ENCODE measurements at regions of chr14 and their contacts with region 1.

Region 1: DNA sequence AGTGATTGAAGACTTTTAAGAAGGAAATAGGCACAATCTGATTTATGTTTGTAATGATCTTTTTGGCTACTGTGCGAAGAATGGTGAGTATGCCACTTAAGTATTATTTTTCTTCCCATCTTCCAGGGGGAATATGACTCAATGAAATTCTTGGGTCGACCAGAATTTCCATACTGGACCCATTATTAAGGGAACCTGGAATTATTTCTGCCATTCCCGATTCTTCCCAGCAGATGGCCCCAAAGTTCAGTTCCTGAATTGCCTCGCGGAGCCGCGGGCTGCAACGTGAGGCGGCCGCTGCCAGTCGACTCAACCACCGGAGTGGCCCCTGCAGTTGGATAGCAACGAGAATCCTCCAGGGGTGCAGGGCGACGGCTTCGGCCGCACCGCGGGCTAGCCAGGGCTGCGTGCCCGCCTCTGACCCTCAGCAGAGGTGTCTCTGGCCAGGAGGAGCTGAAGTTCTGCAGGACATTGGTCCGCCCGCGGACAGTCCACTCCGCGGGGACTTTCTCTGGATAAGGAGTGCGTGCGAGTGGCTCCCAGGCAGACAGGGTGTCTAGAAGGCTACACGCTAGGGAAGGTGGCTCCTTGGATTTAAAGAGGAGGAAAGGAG is 628 bp upstream of the TSHR start:
- DNase-seq: peak; percentile 47 to 82
- H3K4me3 ChIP-seq: peak overlapping the region; percentile 38; the same call in 1 of the 2 replicates
- H3K27ac ChIP-seq: no peak overlapping the region
- H3K4me1 ChIP-seq: no peaks in the 10 kb centered on the region
- H3K27me3 ChIP-seq: peaks cover 10% of the 10 kb centered on the region; the same call in 1 of the 2 replicates
- CTCF ChIP-seq: peak; percentile 88

Region 2: GRCh38 chr14:79167960-79168359 is 1786.8 kb before region 1 on chr14:
- CTCF ChIA-PET with region 1: no interaction called
- POLR2A ChIA-PET with region 1: no interaction called
- intact Hi-C with region 1: no loop called
- DNase-seq: no peak
- H3K4me3 ChIP-seq: no peak overlapping the region
- H3K27ac ChIP-seq: no peak overlapping the region
- H3K4me1 ChIP-seq: no peaks in the 10 kb centered on the region
- H3K27me3 ChIP-seq: no peaks in the 10 kb centered on the region
- CTCF ChIP-seq: no peak

Region 3: DNA sequence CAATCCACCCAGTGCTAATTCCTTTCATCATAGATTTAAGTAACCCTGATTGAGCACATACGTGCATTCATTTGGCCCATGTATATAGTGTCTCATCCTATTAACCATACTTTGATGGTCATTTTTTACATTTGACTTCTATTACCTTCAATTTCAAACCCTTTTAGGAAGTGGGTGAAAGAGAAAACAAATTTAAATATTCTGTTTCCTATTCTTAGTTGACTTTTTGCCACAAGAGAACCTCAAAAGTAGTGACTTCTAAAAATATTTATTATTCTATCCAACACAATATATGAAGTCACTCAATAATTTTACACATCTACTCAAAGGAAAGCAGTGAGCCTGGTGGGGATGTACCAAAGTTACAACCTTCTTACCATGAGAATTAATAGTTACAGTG is 178.1 kb before region 1 on chr14:
- CTCF ChIA-PET with region 1: no interaction called
- POLR2A ChIA-PET with region 1: no interaction called
- intact Hi-C with region 1: no loop called
- DNase-seq: no peak
- H3K4me3 ChIP-seq: no peak overlapping the region
- H3K27ac ChIP-seq: no peak overlapping the region
- H3K4me1 ChIP-seq: no peaks in the 10 kb centered on the region
- H3K27me3 ChIP-seq: no peaks in the 10 kb centered on the region
- CTCF ChIP-seq: no peak

Region 4: DNA sequence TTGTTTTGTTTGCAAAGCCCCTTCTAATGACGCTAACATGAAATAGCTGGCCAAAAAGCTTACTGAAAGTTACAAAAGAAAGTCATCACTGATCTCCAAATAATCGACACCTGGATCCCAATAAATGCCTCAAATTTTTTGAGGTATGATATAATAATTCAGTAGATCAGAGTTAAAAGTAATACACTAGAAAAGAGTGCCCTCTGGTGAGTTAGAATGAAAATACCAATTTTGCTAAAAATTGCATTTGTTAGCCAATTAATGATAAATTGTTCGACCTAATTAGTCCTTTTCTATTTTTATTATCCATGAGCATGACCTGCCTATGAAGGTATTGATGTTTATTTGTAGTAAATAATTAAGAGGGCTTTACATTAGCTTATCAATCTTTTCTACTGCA is 91.8 kb before region 1 on chr14:
- CTCF ChIA-PET with region 1: no interaction called
- POLR2A ChIA-PET with region 1: no interaction called
- intact Hi-C with region 1: no loop called
- DNase-seq: no peak
- H3K4me3 ChIP-seq: no peak overlapping the region
- H3K27ac ChIP-seq: no peak overlapping the region
- H3K4me1 ChIP-seq: no peaks in the 10 kb centered on the region
- H3K27me3 ChIP-seq: no peaks in the 10 kb centered on the region
- CTCF ChIP-seq: peak; percentile 70

Region 5: DNA sequence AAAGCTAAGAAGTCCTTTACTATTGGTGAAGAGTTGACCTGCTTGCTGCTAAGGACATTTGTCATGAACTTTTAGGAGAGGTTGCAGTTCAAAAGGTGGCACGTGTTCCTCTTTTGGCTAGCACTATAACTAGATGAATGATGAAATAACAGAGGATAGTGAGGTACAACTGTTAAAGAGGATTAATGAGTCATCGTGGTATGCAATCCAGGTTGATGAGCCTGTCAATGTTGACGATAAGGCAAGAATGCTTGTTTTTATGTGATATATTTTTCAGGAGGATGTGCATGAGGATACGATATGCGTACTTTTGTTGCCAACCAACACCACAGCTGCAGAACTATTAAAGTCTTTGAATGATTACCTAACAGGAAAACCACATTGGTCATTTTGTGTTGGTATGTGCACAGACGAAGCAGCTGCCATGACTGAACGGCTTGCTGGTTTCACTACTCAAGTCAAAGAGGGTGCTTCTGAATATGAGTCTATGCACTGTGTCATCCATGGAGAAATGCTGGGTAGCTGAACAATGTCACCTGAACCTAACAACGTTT is 23.9 kb before region 1 on chr14:
- CTCF ChIA-PET with region 1: no interaction called
- POLR2A ChIA-PET with region 1: no interaction called
- intact Hi-C with region 1: no loop called
- DNase-seq: peak in 1 of 2 experiments; percentile 45
- H3K4me3 ChIP-seq: no peak overlapping the region
- H3K27ac ChIP-seq: 0 out of 2 replicates have a peak overlapping the region, but pooled peaks have one; percentile 3
- H3K4me1 ChIP-seq: peaks cover 10% of the 10 kb centered on the region; the same call in 1 of the 2 replicates
- H3K27me3 ChIP-seq: no peaks in the 10 kb centered on the region
- CTCF ChIP-seq: no peak

Region 6: DNA sequence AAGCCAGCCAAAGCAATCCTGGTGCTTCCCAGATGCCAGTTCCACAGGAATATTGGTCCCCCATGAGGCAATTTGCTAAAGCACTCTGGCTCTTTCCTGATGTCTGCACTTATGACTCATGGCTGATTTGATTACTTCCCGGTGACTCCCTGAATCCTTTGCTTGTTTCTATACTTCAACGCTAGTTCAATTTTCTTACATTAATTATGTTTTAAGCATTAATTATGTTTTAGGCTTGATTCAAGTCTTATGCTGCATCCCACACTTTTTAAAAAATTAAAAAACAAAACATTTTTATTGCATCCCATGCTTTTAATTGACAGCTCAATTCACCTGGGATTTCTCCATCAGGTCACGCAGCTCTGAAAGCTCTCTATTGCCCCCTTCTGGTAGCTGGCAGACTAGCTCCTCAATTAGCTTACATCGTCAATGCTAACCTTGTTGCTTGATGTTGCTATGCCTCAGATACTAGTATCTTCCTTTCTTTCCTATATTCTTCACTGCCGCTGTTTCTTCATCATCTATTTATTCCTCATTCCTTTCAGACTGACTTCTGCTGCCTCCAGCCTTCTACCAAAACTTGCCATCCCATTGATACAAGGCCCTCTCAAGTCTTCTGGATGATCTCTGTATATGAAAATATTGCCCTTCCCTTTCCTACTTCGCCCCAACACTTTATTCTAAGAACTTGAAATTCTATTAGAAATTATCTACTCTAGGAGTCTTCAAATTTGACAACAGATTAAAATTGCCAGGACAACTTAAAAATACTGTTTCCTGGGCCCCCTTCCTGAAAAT is 32.6 kb after region 1 on chr14:
- CTCF ChIA-PET with region 1: interaction called, 16 read pairs
- POLR2A ChIA-PET with region 1: no interaction called
- intact Hi-C with region 1: loop called (anchors 1 kb)
- DNase-seq: peak; percentile 69 to 72
- H3K4me3 ChIP-seq: peak overlapping the region; percentile 4; the same call in 1 of the 2 replicates
- H3K27ac ChIP-seq: no peak overlapping the region
- H3K4me1 ChIP-seq: peaks cover 7% of the 10 kb centered on the region; the same call in 1 of the 2 replicates
- H3K27me3 ChIP-seq: peaks cover 10% of the 10 kb centered on the region; the same call in 1 of the 2 replicates
- CTCF ChIP-seq: peak; percentile 98

Region 7: DNA sequence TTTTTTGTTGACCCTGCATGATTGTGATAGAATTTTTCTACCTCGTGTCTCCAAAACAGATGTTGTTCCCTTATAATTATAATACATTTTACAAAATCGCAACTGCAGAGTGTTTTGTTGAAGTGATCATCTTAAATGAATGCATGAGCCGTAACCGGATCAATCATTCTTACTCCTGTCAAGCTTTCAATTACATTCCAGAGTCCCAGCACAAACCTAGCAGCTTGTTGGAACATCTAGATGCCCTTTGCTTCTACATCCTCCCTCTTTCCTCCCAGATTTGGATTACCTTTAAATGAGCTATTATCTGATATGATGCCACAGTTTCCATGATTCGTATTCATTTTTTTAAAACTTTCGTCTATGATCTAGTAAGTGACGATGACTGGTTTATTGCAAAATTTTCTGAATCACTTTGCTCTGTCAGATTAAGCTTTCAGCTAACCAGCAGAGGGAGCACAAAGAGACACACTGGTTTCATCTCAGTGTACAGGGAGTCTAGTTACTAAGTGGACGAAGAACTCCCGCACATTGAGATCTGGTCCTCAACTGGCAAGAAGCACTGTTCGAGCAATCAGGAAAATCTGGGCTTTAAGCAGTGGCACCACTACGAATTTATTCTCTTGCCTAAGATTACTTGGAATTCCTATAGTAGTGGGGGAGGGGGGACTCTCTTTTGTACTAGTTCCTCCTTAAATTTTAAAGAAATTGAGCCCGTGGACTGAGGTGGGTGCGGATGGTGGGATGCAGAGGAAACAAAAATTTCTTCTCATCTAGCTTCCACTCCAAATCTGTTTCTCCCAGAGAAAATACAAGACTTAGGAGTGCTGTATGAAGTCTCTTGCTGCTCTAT is 41.5 kb after region 1 on chr14:
- CTCF ChIA-PET with region 1: no interaction called
- POLR2A ChIA-PET with region 1: no interaction called
- intact Hi-C with region 1: loop called (anchors 2 kb)
- DNase-seq: peak in 1 of 2 experiments; percentile 65
- H3K4me3 ChIP-seq: no peak overlapping the region
- H3K27ac ChIP-seq: no peak overlapping the region
- H3K4me1 ChIP-seq: no peaks in the 10 kb centered on the region
- H3K27me3 ChIP-seq: peaks cover 14% of the 10 kb centered on the region
- CTCF ChIP-seq: peak; percentile 73

Region 8: DNA sequence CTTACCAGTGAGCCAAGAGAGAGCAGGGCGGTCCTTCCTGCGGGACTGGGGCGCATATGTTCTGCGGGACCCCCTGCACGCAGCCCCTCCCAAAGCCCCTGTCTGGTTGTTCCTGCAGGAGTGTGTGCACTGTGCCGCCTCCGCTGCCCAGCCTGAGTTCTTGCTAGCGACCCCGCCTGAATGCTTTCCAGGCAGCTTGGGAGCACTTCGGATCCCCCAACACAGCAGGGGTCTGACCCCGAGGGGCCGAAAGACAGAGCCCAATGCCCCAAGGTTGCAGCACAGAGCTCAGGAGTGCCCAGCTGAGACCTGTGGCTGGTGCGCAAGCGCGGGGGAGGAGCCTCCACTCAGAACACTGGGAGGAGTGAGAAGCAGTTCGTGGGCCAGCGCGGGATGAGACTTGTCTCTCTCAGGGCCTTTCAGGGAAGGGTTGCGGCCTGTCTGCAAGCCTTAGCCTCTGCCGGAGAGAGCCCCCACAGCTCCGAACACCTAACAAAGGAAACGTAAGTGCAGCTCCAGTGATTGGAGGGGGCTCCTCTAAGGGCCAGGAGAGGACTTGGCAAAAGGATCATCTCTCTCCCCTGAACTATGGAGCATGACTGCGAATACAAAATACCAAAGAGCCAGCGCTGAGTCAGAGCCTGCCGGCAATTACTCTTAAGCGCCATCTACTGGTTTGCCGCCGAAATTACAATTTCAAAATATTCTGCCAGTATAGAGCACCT is 215.5 kb after region 1 on chr14:
- CTCF ChIA-PET with region 1: no interaction called
- POLR2A ChIA-PET with region 1: no interaction called
- intact Hi-C with region 1: loop called (anchors 1 kb)
- DNase-seq: peak; percentile 68 to 84
- H3K4me3 ChIP-seq: peak overlapping the region; percentile 54
- H3K27ac ChIP-seq: 0 out of 2 replicates have a peak overlapping the region, but pooled peaks have one; percentile 16
- H3K4me1 ChIP-seq: no peaks in the 10 kb centered on the region
- H3K27me3 ChIP-seq: no peaks in the 10 kb centered on the region
- CTCF ChIP-seq: peak; percentile 93

Region 9: DNA sequence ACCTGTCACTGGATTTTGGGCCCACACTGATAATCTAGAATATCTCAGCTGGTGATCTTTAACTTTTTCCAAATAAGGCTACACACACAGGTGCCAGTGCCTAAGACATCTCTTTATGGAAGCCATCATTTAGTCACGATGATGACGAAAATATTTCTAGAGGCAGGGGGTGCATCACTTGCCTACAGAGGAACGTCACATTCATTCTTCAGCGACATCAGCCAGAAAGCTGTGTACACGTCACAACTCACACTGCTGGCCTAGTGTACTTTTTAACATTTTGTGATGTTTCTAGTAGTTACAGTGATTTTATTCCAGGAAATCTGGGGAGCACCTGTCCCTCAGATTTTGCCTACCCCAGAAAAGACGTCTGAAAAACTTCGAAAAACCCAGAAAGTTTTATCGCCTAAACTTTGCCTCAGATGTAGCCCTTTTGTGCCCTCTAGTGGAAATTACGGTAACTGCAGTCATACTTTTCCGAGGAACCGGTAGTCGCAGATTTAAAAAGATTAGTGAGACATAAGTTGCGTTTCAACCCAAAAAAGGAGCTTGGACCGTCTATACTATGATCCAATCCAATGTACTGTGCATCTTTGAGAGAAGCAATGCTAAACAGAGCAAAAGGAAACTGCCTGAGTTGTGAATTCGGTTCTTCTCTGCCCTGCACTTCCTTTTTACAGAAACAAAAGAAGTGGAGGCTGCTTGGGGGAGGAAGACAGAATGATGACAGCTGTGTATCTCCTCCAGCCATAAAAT is 509.6 kb after region 1 on chr14:
- CTCF ChIA-PET with region 1: interaction called, 3 read pairs
- POLR2A ChIA-PET with region 1: no interaction called
- intact Hi-C with region 1: loop called (anchors 10 kb)
- DNase-seq: peak in 1 of 2 experiments; percentile 5
- H3K4me3 ChIP-seq: peak overlapping the region; percentile 33; the same call in 1 of the 2 replicates
- H3K27ac ChIP-seq: no peak overlapping the region
- H3K4me1 ChIP-seq: no peaks in the 10 kb centered on the region
- H3K27me3 ChIP-seq: no peaks in the 10 kb centered on the region
- CTCF ChIP-seq: peak; percentile 90

Measured in PC-9 (cell line).